Left ventricle myocardium inferior (tissue), 1 donor: ENCODE measurements at regions of chr14 and their contacts with region 1.

Region 1: GRCh38 chr14:54691525-54692283 is 124.8 kb downstream of the SAMD4A start:
- DNase-seq: peak; percentile 79
- H3K4me3 ChIP-seq: no peak overlapping the region
- H3K27ac ChIP-seq: peak overlapping the region; percentile 94
- H3K4me1 ChIP-seq: peaks cover 96% of the 10 kb centered on the region
- H3K27me3 ChIP-seq: no peaks in the 10 kb centered on the region
- CTCF ChIP-seq: peak; percentile 96

Region 2: GRCh38 chr14:54572316-54572715 is 119.4 kb before region 1 on chr14:
- intact Hi-C with region 1: loop called (anchors 5 kb)
- DNase-seq: no peak
- H3K4me3 ChIP-seq: no peak overlapping the region
- H3K27ac ChIP-seq: no peak overlapping the region
- H3K4me1 ChIP-seq: peaks cover 100% of the 10 kb centered on the region
- H3K27me3 ChIP-seq: no peaks in the 10 kb centered on the region
- CTCF ChIP-seq: peak; percentile 55

Region 3: GRCh38 chr14:54773171-54773975 is 81.7 kb after region 1 on chr14:
- intact Hi-C with region 1: loop called (anchors 5 kb)
- DNase-seq: peak; percentile 78
- H3K4me3 ChIP-seq: peak overlapping the region; percentile 22
- H3K27ac ChIP-seq: peak overlapping the region; percentile 91
- H3K4me1 ChIP-seq: peaks cover 95% of the 10 kb centered on the region
- H3K27me3 ChIP-seq: no peaks in the 10 kb centered on the region
- CTCF ChIP-seq: peak; percentile 73